ENCODE measurements at regions of chr5 and their contacts with region 1.

Region 1: GRCh38 chr5:17189381-17190036 is 27.9 kb upstream of the BASP1 start:
- DNase-seq: peak; percentile 86
- ATAC-seq: peak; percentile 7; the same call in 1 of the 2 replicates
- H3K4me3 ChIP-seq: no peak overlapping the region
- H3K27ac ChIP-seq: peak overlapping the region; percentile 90
- H3K4me1 ChIP-seq: peaks cover 40% of the 10 kb centered on the region
- H3K27me3 ChIP-seq: no peaks in the 10 kb centered on the region
- CTCF ChIP-seq: peak; percentile 78
- POLR2A ChIP-seq: peak; percentile 58; the same call in 1 of the 2 replicates
- RAD21 ChIP-seq: peak; percentile 88

Region 2: DNA sequence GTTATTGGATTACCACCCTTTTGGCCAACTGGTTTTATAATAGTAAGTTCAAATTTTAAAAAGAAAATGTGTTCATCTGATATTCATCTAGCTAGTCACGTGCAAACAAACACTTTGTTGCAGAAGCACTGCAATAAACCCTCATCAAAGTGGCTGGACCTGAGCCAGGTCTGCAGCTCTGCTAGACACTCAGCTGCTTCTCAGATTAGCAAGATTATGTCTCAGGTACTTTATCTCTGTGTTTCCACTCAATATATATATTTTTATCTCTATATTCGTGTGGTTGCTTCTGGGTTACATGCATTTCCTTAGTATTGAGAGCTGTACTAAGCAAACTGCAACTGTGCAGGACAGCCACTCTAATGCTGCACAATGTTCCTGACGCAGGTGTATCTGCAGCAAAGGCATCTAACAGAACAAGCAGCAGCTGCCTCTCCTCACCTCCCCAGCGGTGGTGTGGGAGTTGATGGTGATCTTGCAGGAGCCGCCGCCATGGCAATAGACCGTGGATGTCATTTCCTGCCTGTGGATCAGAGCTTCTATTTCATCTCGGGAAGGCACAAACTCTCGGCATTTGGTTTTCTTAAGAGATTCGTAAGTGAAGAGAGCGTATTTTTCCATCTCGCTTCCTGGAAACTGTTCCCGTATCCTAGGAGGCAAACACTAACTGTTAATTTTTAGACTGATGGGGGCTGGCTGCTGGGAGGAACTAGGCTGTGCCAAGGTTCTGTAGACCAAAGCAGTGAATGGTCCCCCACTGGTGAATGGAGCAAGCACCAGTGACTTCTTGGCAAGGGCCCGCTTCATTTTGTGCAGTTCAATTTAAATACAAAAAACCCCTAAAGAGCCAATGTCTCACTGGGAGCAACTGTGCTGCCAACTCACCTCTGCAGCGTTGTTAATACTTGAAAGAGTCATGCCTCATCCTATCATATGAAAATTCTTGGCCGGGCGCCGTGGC is 516.0 kb before region 1 on chr5:
- CTCF ChIA-PET with region 1: no interaction called
- POLR2A ChIA-PET with region 1: no interaction called
- dilution Hi-C with region 1: no loop called
- in situ Hi-C with region 1: loop called (anchors 10 kb)
- intact Hi-C with region 1: no loop called
- DNase-seq: no peak
- ATAC-seq: no peak
- H3K4me3 ChIP-seq: no peak overlapping the region
- H3K27ac ChIP-seq: no peak overlapping the region
- H3K4me1 ChIP-seq: peaks cover 9% of the 10 kb centered on the region
- H3K27me3 ChIP-seq: no peaks in the 10 kb centered on the region
- CTCF ChIP-seq: no peak
- POLR2A ChIP-seq: no peak
- RAD21 ChIP-seq: no peak

Region 3: DNA sequence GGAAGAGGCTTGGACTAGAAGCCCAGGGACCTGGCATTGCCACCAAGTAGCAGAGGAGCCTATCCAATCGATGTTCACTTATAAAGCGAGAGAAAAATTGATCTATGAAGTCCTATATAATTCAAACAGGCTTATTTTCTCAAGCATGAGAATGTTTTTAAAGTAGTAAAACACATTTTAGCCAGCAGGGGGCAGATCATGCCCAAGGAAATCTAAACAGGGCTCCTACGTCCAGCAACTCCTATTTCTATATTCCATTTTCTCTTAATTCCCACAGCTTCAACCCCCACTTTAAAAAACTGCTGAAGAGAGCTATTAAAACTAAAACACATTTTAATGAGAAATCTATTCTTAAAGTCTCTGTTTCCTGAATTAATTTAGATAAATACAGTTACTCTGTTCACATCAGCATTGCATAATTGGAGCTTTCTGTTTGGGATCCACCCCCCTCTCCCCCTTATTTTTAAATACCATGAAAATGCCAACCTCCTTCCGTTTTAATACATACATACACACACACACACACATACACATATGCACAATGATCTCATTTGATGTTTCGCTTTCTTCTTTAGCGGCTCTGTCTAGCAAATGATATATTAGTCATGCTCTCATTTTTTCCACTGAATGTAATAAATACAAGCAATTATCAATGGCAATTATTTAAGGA is 398.3 kb before region 1 on chr5:
- CTCF ChIA-PET with region 1: interaction called, 14 read pairs
- POLR2A ChIA-PET with region 1: no interaction called
- dilution Hi-C with region 1: loop called (anchors 25 kb)
- in situ Hi-C with region 1: loop called (anchors 5 kb)
- intact Hi-C with region 1: loop called (anchors 1 kb)
- DNase-seq: peak; percentile 74
- ATAC-seq: peak; percentile 66
- H3K4me3 ChIP-seq: no peak overlapping the region
- H3K27ac ChIP-seq: no peak overlapping the region
- H3K4me1 ChIP-seq: peaks cover 13% of the 10 kb centered on the region
- H3K27me3 ChIP-seq: no peaks in the 10 kb centered on the region
- CTCF ChIP-seq: peak; percentile 71
- POLR2A ChIP-seq: no peak
- RAD21 ChIP-seq: peak; percentile 80

Region 4: DNA sequence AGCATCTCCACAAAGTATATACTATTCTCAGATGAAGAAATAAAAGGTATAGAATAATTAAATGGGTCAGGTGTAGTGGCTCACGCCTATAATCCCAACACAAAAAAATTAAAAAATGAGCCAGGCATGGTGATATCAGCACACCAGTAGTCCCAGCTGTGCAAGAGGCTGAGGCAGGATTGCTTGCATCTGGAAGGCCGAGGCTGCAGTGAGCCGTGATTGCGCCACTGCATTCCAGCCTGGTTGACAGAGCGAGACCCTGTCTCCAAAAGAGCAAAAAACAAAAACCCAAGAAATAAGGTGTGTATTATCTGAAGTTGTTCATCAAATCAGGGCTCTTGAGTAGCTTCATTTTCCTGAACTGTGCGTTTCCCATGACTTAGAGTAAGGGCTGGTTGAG is 170.2 kb before region 1 on chr5:
- CTCF ChIA-PET with region 1: no interaction called
- POLR2A ChIA-PET with region 1: no interaction called
- dilution Hi-C with region 1: no loop called
- in situ Hi-C with region 1: no loop called
- intact Hi-C with region 1: loop called (anchors 2 kb)
- DNase-seq: peak; percentile 72
- ATAC-seq: peak; percentile 64
- H3K4me3 ChIP-seq: no peak overlapping the region
- H3K27ac ChIP-seq: peak overlapping the region; percentile 85
- H3K4me1 ChIP-seq: peaks cover 18% of the 10 kb centered on the region
- H3K27me3 ChIP-seq: no peaks in the 10 kb centered on the region
- CTCF ChIP-seq: no peak
- POLR2A ChIP-seq: no peak
- RAD21 ChIP-seq: no peak

Measured in IMR-90 (cell line).